A549 (cell line): ENCODE measurements at regions of chr3 and their contacts with region 1.

Region 1: GRCh38 chr3:71006810-71007785 is 576.4 kb downstream of the FOXP1 start:
- DNase-seq: peak; percentile 24 to 41
- ATAC-seq: peak; percentile 56 to 75; a peak in 3 of 6 replicates
- H3K4me3 ChIP-seq: no peak overlapping the region
- H3K27ac ChIP-seq: peak overlapping the region; percentile 7 to 34; a peak in 1 of 6 replicates
- H3K4me1 ChIP-seq: peaks cover 9% of the 10 kb centered on the region; the same call in 2 of the 3 replicates
- CTCF ChIP-seq: peak; percentile 83
- EP300 ChIP-seq: no peak
- POLR2A ChIP-seq: no peak
- RAD21 ChIP-seq: peak; percentile 81 to 86

Region 2: DNA sequence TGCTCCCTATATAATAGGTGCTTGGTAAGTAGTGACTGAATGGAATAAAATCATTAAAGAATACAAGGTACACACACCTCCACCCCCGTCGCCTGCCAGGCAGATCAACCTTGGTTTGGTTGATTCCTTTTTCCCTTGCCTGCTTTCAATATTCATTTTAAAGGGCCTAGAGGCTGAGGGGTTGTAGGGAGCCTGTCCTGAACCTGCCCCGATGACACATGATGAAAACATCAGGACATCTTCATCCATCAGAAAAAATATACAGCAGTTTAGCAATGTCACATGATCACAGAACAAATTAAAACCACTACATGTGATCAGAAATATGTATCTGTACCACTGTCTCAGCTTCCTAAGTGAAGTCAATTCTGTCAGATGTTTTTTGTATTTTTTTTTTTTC is 12.5 kb before region 1 on chr3:
- CTCF ChIA-PET with region 1: interaction called, 11 read pairs
- POLR2A ChIA-PET with region 1: no interaction called
- DNase-seq: no peak
- ATAC-seq: no peak
- H3K4me3 ChIP-seq: no peak overlapping the region
- H3K27ac ChIP-seq: no peak overlapping the region
- H3K4me1 ChIP-seq: peaks cover 1% of the 10 kb centered on the region; the same call in 2 of the 3 replicates
- CTCF ChIP-seq: no peak
- EP300 ChIP-seq: no peak
- POLR2A ChIP-seq: no peak
- RAD21 ChIP-seq: no peak